Activated CD8-positive, alpha-beta T cell treated with anti-CD3 and anti-CD28 coated beads, Interleukin-2, amount 10 ng/mL, durations not matched to agents 7 days and 5 days (primary cell): ENCODE measurements at regions of chr10 and their contacts with region 1.

Region 1: DNA sequence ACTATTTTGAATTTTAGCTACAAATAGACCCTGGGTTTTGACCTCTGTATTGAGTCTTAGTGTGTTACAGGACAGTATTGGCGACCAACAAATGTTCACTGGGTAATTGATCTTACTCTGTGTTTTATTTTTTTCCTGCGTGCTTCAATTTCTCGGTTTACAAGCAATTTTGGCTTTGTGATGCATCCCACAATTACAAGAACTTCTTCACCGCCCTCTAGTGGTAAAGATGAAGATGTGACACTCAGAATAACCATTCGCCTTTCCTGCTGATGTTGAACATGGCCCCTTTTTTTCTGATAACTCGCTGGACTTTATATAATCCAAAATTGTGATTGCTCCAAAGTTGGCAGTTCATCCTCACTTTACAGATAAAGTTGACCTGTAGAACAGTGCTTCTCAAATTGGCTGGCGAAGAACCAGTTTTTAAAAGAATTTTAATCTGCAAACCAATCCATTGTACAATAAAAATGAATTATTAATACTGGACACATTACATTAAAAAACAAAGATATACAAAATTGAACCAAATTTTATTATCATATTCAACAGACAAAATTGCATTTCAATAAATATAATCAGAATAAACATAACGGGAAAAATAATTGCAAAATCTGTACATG is 20.2 kb upstream of the SMC3 start:
- DNase-seq: peak; percentile 45
- ATAC-seq: peak; percentile 76
- H3K4me3 Mint-ChIP-seq: no peak overlapping the region
- H3K27ac Mint-ChIP-seq: no peak overlapping the region
- H3K4me1 Mint-ChIP-seq: peaks cover 13% of the 10 kb centered on the region
- H3K27me3 Mint-ChIP-seq: peaks cover 24% of the 10 kb centered on the region

Region 2: GRCh38 chr10:110311357-110311949 is 235.8 kb before region 1 on chr10:
- CTCF ChIA-PET with region 1: interaction called, 54 read pairs
- POLR2A ChIA-PET with region 1: no interaction called
- DNase-seq: peak; percentile 47
- ATAC-seq: peak; percentile 69
- H3K4me3 Mint-ChIP-seq: no peak overlapping the region
- H3K27ac Mint-ChIP-seq: no peak overlapping the region
- H3K4me1 Mint-ChIP-seq: peaks cover 18% of the 10 kb centered on the region
- H3K27me3 Mint-ChIP-seq: peaks cover 13% of the 10 kb centered on the region

Region 3: GRCh38 chr10:110420401-110421193 is 126.7 kb before region 1 on chr10:
- CTCF ChIA-PET with region 1: no interaction called
- POLR2A ChIA-PET with region 1: no interaction called
- DNase-seq: no peak
- ATAC-seq: peak; percentile 40
- H3K4me3 Mint-ChIP-seq: no peak overlapping the region
- H3K27ac Mint-ChIP-seq: peak overlapping the region; percentile 57
- H3K4me1 Mint-ChIP-seq: peaks cover 58% of the 10 kb centered on the region
- H3K27me3 Mint-ChIP-seq: peaks cover 2% of the 10 kb centered on the region

Region 4: GRCh38 chr10:110497438-110498086 is 49.7 kb before region 1 on chr10 and contains the start of gene DUSP5:
- CTCF ChIA-PET with region 1: interaction called, 49 read pairs
- POLR2A ChIA-PET with region 1: interaction called, 5 read pairs
- DNase-seq: peak; percentile 95
- ATAC-seq: peak; percentile 74
- H3K4me3 Mint-ChIP-seq: peak within 1 kb of the TSS; percentile 97
- H3K27ac Mint-ChIP-seq: peak within 1 kb of the TSS; percentile 89
- H3K4me1 Mint-ChIP-seq: peaks cover 56% of the 10 kb centered on the region
- H3K27me3 Mint-ChIP-seq: no peaks in the 10 kb centered on the region
- total RNA-seq, gene DUSP5: 26.8 to 27.8 TPM

Region 5: GRCh38 chr10:110567201-110568054 is 20.2 kb after region 1 on chr10 and contains the start of gene SMC3:
- CTCF ChIA-PET with region 1: interaction called, 10 read pairs
- POLR2A ChIA-PET with region 1: interaction called, 5 read pairs
- DNase-seq: peak; percentile 94
- ATAC-seq: peak; percentile 85
- H3K4me3 Mint-ChIP-seq: peak within 1 kb of the TSS; percentile 95
- H3K27ac Mint-ChIP-seq: peak within 1 kb of the TSS; percentile 99
- H3K4me1 Mint-ChIP-seq: peaks cover 39% of the 10 kb centered on the region
- H3K27me3 Mint-ChIP-seq: peaks cover 17% of the 10 kb centered on the region
- total RNA-seq, gene SMC3: 75.6 to 82.2 TPM